ENCODE measurements at regions of chr1 and their contacts with region 1.

Region 1: GRCh38 chr1:88655685-88656299 is 28.3 kb upstream of the PKN2 start:
- DNase-seq: no peak
- ATAC-seq: no peak
- H3K4me3 Mint-ChIP-seq: no peak overlapping the region
- H3K27ac Mint-ChIP-seq: no peak overlapping the region
- H3K4me1 Mint-ChIP-seq: peaks cover 2% of the 10 kb centered on the region; the same call in 1 of the 2 replicates
- H3K27me3 Mint-ChIP-seq: no peaks in the 10 kb centered on the region
- CTCF ChIP-seq: peak; percentile 64

Region 2: DNA sequence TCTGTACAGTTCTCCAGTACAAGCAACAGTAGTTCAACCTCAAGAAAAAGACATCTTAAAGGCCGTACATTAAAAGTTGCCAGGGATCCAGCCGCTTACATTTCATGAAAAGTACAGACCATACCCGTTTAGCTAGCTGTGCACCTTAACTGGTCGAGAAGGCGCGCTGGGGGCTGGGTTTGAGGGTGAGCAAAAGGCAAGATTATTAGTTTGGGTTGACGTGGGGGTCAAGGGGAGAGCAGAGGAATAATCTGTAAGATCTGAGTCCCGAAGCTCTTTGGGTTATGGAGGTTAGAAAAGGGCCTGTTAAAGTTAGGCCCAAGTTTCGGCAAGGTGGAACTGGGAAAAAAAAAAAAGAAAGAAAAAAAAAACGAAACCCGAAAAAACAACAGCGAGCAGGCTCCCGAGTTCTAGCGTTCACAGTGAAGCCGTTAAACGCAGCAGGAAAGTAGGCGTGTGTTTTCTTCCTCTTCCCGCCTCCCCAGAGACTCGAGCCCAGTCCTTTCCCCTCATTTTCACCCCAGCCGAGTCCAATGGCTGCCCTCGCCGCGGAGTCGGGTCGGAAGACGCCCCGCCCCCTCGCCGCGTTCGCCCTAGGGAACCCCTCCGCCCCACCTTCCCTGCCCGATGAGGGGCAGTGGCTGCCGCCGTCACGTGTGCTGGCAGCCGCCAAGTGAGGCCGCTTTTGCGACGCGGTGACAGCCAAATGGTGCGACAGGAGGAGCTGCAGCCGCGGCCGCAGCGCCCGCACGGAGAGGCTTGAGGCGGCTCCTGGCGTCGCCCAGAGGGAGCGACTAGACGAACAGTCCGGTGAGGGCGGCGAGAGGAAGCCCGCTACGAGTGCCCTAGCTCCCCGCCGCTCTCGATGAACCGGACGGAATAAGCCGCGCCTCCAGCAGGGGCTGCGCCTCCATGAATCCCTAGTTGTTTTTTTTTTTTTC is 28.0 kb after region 1 on chr1 and contains the start of gene PKN2:
- CTCF ChIA-PET with region 1: interaction called, 17 read pairs
- POLR2A ChIA-PET with region 1: interaction called, 5 read pairs
- DNase-seq: peak; percentile 97
- ATAC-seq: peak; percentile 95
- H3K4me3 Mint-ChIP-seq: peak within 1 kb of the TSS; percentile 98
- H3K27ac Mint-ChIP-seq: peak within 1 kb of the TSS; percentile 100
- H3K4me1 Mint-ChIP-seq: peaks cover 13% of the 10 kb centered on the region
- H3K27me3 Mint-ChIP-seq: no peaks in the 10 kb centered on the region
- CTCF ChIP-seq: no peak
- total RNA-seq, gene PKN2: 30.8 to 32.6 TPM (median 32.2 TPM) in 3 replicates